AG04450 (cell line): ENCODE measurements at regions of chr20 and their contacts with region 1.

Region 1: GRCh38 chr20:5100684-5101347 is 18.9 kb downstream of the PCNA start:
- DNase-seq: no peak
- H3K4me3 ChIP-seq: no peak overlapping the region
- H3K27ac ChIP-seq: no peak overlapping the region
- H3K27me3 ChIP-seq: no peaks in the 10 kb centered on the region
- CTCF ChIP-seq: peak; percentile 79

Region 2: DNA sequence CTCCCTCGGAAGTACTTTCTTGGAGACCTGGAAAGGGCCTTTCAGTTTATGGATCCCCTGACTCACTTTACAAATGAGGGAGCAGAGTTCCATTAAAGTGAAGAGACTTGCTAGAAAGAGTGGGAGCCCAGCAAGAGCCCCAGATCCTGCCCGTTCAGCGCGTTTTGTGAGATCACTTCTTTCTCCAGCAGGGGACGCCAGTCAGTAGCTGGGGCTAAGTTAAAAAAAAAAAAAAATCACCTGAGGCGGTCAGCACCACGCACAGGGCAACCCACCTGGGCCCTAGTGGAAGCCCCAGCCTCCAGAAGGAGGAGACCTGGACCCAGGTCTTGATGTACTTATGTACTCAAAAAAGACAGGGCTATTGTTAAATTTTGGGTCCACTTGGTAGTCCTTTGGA is 810.9 kb before region 1 on chr20:
- CTCF ChIA-PET with region 1: no interaction called
- POLR2A ChIA-PET with region 1: no interaction called
- DNase-seq: no peak
- H3K4me3 ChIP-seq: no peak overlapping the region
- H3K27ac ChIP-seq: no peak overlapping the region
- H3K27me3 ChIP-seq: peaks cover under 1% of the 10 kb centered on the region
- CTCF ChIP-seq: peak; percentile 28; the same call in 1 of the 2 replicates

Region 3: DNA sequence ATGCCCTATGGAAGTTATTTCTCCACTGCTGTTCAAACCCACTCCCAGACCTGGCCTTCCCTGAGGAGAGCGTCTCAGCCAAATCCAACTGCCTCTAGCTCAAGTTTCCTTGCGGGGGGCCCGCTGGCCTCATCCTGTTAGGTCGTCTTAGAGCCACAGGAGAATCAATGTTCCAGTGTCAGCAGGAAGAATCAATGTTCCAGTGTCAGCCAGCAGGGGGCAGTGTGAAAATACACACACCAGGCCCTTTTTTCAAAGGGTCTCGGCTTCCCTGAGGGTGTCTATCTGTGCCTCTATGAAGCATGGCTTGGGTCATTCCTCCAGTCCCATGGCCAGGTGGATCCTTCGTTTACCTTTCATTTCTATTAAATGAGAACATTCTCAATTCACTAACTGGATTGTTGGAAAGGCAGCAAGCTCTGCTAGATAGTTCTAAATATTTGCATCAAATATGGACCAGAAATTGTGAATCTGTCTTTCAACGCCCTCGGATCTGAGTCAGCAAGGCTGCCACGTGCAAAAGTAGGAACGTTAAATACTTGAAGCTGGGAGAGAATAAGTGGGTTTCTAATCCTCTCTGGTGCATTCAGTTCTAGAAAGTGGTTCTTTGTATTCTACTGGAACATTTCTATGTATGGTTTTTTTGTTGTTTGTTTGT is 359.9 kb before region 1 on chr20:
- CTCF ChIA-PET with region 1: interaction called, 28 read pairs
- POLR2A ChIA-PET with region 1: no interaction called
- DNase-seq: no peak
- H3K4me3 ChIP-seq: no peak overlapping the region
- H3K27ac ChIP-seq: no peak overlapping the region
- H3K27me3 ChIP-seq: peaks cover 16% of the 10 kb centered on the region
- CTCF ChIP-seq: peak; percentile 67

Region 4: DNA sequence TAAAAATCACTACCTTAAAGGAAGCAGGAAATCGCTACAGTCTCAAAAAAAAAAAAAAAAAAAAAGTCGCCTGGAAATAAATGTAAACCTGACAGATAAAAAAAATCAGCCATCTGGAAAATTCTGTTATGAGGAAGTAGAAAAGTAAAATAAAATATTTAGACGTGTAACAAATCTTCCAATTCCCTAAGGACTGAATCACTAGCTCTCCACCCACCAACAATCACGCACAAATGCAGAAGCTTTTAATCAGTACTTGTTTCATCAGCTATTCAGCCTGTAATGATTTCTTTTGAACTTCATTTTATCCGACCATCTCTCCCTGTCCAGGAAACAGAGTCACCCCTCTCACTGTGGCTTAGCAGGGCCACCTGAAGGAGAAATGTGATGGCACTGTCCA is 158.5 kb before region 1 on chr20:
- CTCF ChIA-PET with region 1: interaction called, 8 read pairs
- POLR2A ChIA-PET with region 1: interaction called, 11 read pairs
- DNase-seq: peak; percentile 83
- H3K4me3 ChIP-seq: no peak overlapping the region
- H3K27ac ChIP-seq: peak overlapping the region; percentile 90
- H3K27me3 ChIP-seq: no peaks in the 10 kb centered on the region
- CTCF ChIP-seq: no peak

Region 5: GRCh38 chr20:4956200-4956810 is 144.5 kb before region 1 on chr20:
- CTCF ChIA-PET with region 1: interaction called, 42 read pairs
- POLR2A ChIA-PET with region 1: no interaction called
- DNase-seq: no peak
- H3K4me3 ChIP-seq: no peak overlapping the region
- H3K27ac ChIP-seq: no peak overlapping the region
- H3K27me3 ChIP-seq: no peaks in the 10 kb centered on the region
- CTCF ChIP-seq: peak; percentile 88

Region 6: DNA sequence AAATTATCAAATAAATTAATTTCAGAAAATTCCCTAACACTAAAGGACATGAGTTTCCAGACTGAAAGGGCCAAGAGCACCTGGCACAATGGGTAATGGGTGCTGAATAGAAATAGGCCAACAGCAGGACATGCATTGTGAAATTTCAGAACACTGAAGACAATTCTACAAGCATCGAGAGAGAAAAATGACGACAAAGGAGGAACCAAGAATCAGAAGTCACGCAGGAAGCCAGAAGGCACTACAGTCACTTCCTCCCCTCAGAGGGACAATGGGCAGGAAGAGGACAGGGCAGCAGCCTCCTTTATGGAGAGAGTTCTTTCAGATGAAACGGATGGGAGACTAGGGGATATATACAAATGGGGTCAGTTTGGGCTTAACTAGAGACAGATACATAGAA is 10.6 kb before region 1 on chr20:
- CTCF ChIA-PET with region 1: interaction called, 15 read pairs
- POLR2A ChIA-PET with region 1: no interaction called
- DNase-seq: no peak
- H3K4me3 ChIP-seq: no peak overlapping the region
- H3K27ac ChIP-seq: no peak overlapping the region
- H3K27me3 ChIP-seq: no peaks in the 10 kb centered on the region
- CTCF ChIP-seq: no peak

Region 7: DNA sequence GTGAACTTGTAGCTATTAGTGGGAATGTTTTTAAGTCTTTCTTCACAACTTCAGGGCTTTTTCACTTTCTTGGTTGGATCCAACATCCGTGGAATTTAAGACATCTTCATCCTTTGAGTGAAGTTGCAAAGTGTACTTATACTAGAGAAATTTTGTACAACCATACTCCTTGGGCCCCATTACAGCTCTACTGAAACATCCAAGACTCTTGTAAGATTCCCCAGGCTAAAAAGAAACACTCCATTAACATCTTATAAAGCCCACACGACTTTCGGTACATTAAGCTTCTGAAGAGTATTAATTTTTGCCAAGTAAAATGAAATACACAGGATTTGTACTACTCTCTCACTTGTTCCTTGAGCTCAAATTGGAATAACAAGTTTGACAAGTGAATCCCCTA is 13.6 kb after region 1 on chr20:
- CTCF ChIA-PET with region 1: interaction called, 11 read pairs
- POLR2A ChIA-PET with region 1: no interaction called
- DNase-seq: no peak
- H3K4me3 ChIP-seq: no peak overlapping the region
- H3K27ac ChIP-seq: no peak overlapping the region
- H3K27me3 ChIP-seq: no peaks in the 10 kb centered on the region
- CTCF ChIP-seq: no peak

Region 8: GRCh38 chr20:5279661-5280060 is 178.8 kb after region 1 on chr20:
- CTCF ChIA-PET with region 1: no interaction called
- POLR2A ChIA-PET with region 1: no interaction called
- DNase-seq: no peak
- H3K4me3 ChIP-seq: no peak overlapping the region
- H3K27ac ChIP-seq: no peak overlapping the region
- H3K27me3 ChIP-seq: no peaks in the 10 kb centered on the region
- CTCF ChIP-seq: no peak

Region 9: GRCh38 chr20:5557123-5557522 is 456.3 kb after region 1 on chr20:
- CTCF ChIA-PET with region 1: no interaction called
- POLR2A ChIA-PET with region 1: no interaction called
- DNase-seq: no peak
- H3K4me3 ChIP-seq: no peak overlapping the region
- H3K27ac ChIP-seq: no peak overlapping the region
- H3K27me3 ChIP-seq: no peaks in the 10 kb centered on the region
- CTCF ChIP-seq: peak; percentile 75